ENCODE measurements at regions of chr1 and their contacts with region 1.

Region 1: GRCh38 chr1:234212764-234213657 is 160.2 kb upstream of the COA6 start:
- DNase-seq: peak; percentile 55
- ATAC-seq: peak; percentile 66
- H3K4me3 Mint-ChIP-seq: peak overlapping the region; percentile 80
- H3K27ac Mint-ChIP-seq: peak overlapping the region; percentile 87
- H3K4me1 Mint-ChIP-seq: peaks cover 38% of the 10 kb centered on the region
- H3K27me3 Mint-ChIP-seq: no peaks in the 10 kb centered on the region

Region 2: GRCh38 chr1:234170622-234171021 is 42.4 kb before region 1 on chr1:
- POLR2A ChIA-PET with region 1: interaction called, 23 read pairs
- DNase-seq: peak; percentile 69
- ATAC-seq: peak; percentile 81
- H3K4me3 Mint-ChIP-seq: peak overlapping the region; percentile 69
- H3K27ac Mint-ChIP-seq: peak overlapping the region; percentile 93
- H3K4me1 Mint-ChIP-seq: peaks cover 62% of the 10 kb centered on the region
- H3K27me3 Mint-ChIP-seq: no peaks in the 10 kb centered on the region

Region 3: GRCh38 chr1:234188454-234188792 is 24.6 kb before region 1 on chr1:
- POLR2A ChIA-PET with region 1: no interaction called
- DNase-seq: peak; percentile 52
- ATAC-seq: no peak
- H3K4me3 Mint-ChIP-seq: no peak overlapping the region
- H3K27ac Mint-ChIP-seq: peak overlapping the region; percentile 66
- H3K4me1 Mint-ChIP-seq: peaks cover 4% of the 10 kb centered on the region
- H3K27me3 Mint-ChIP-seq: peaks cover 63% of the 10 kb centered on the region

Region 4: DNA sequence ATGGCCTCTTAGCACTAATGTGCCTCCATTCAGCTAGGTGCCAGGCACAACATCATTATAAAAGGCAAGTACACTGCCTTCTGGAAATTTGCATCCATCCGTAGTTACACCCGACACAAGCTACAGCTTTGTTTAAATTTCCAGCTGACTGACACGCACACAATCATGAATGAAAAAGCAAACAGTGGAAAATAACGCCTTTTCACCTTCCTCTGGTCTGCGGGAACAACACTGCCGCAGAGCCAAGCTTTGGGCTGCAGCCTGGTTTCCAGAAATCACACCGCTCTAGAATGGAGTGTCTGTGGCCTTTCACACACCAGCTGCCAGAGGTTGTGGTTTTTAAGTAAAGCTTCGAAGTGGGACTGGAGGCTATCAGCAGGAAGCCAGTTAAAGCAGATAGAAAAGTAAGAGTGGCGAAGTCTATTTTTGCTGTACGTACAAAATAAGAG is 17.4 kb after region 1 on chr1:
- POLR2A ChIA-PET with region 1: interaction called, 22 read pairs
- DNase-seq: peak; percentile 58
- ATAC-seq: peak; percentile 89
- H3K4me3 Mint-ChIP-seq: peak overlapping the region; percentile 84
- H3K27ac Mint-ChIP-seq: peak overlapping the region; percentile 86
- H3K4me1 Mint-ChIP-seq: peaks cover 55% of the 10 kb centered on the region
- H3K27me3 Mint-ChIP-seq: no peaks in the 10 kb centered on the region

Measured in activated naive CD8-positive, alpha-beta T cell treated with anti-CD3 and anti-CD28 coated beads, Interleukin-2, amount 10 ng/mL, durations not matched to agents 7 days and 5 days (primary cell).